ENCODE measurements at regions of chr12 and their contacts with region 1.

Region 1: GRCh38 chr12:126454581-126454980 is 1389.3 kb downstream of the AACS start:
- DNase-seq: no peak
- H3K4me3 ChIP-seq: no peak overlapping the region
- H3K27ac ChIP-seq: no peak overlapping the region
- H3K4me1 ChIP-seq: no peaks in the 10 kb centered on the region
- H3K27me3 ChIP-seq: no peaks in the 10 kb centered on the region
- CTCF ChIP-seq: no peak

Region 2: DNA sequence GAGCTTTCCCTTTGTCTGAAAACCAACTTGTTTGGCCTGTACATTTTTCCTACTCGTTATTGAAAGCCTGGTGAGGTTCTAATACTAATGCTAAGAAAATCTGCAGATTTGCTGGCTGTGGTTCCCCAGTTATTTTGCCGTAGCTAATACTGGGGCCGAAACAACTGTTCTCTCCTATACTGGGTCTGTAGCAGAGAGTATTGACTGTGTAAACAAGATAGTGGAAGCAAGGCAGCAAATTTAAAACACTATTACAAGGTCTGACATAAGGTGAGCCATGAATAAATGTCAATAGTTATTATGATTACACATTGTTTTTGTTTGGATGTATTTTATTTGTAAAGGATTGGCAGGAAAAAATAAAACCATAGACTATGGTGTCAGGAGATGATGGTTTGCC is 145.3 kb before region 1 on chr12:
- CTCF ChIA-PET with region 1: no interaction called
- dilution Hi-C with region 1: no loop called
- in situ Hi-C with region 1: no loop called
- intact Hi-C with region 1: no loop called
- DNase-seq: no peak
- H3K4me3 ChIP-seq: no peak overlapping the region
- H3K27ac ChIP-seq: no peak overlapping the region
- H3K4me1 ChIP-seq: no peaks in the 10 kb centered on the region
- H3K27me3 ChIP-seq: no peaks in the 10 kb centered on the region
- CTCF ChIP-seq: no peak

Region 3: GRCh38 chr12:126404293-126404881 is 50.2 kb before region 1 on chr12:
- CTCF ChIA-PET with region 1: no interaction called
- dilution Hi-C with region 1: loop called (anchors 10 kb)
- in situ Hi-C with region 1: no loop called
- intact Hi-C with region 1: no loop called
- DNase-seq: no peak
- H3K4me3 ChIP-seq: no peak overlapping the region
- H3K27ac ChIP-seq: no peak overlapping the region
- H3K4me1 ChIP-seq: no peaks in the 10 kb centered on the region
- H3K27me3 ChIP-seq: no peaks in the 10 kb centered on the region
- CTCF ChIP-seq: no peak

Region 4: GRCh38 chr12:126582231-126582630 is 127.7 kb after region 1 on chr12:
- CTCF ChIA-PET with region 1: no interaction called
- dilution Hi-C with region 1: no loop called
- in situ Hi-C with region 1: no loop called
- intact Hi-C with region 1: no loop called
- DNase-seq: no peak
- H3K4me3 ChIP-seq: no peak overlapping the region
- H3K27ac ChIP-seq: no peak overlapping the region
- H3K4me1 ChIP-seq: no peaks in the 10 kb centered on the region
- H3K27me3 ChIP-seq: no peaks in the 10 kb centered on the region
- CTCF ChIP-seq: no peak

Measured in mammary epithelial cell (primary cell).